MCF 10A (cell line): ENCODE measurements at regions of chr3 and their contacts with region 1.

Region 1: GRCh38 chr3:4712143-4712542 is 219.0 kb downstream of the ITPR1 start:
- DNase-seq: peak; percentile 99
- H3K4me3 Mint-ChIP-seq: peak overlapping the region; percentile 42
- H3K27ac Mint-ChIP-seq: peak overlapping the region; percentile 46
- H3K4me1 Mint-ChIP-seq: peaks cover 22% of the 10 kb centered on the region
- H3K27me3 Mint-ChIP-seq: no peaks in the 10 kb centered on the region
- CTCF ChIP-seq: no peak

Region 2: GRCh38 chr3:4233488-4233887 is 478.7 kb before region 1 on chr3:
- CTCF ChIA-PET with region 1: no interaction called
- POLR2A ChIA-PET with region 1: no interaction called
- intact Hi-C with region 1: no loop called
- DNase-seq: no peak
- H3K4me3 Mint-ChIP-seq: no peak overlapping the region
- H3K27ac Mint-ChIP-seq: no peak overlapping the region
- H3K4me1 Mint-ChIP-seq: no peaks in the 10 kb centered on the region
- H3K27me3 Mint-ChIP-seq: no peaks in the 10 kb centered on the region
- CTCF ChIP-seq: no peak

Region 3: DNA sequence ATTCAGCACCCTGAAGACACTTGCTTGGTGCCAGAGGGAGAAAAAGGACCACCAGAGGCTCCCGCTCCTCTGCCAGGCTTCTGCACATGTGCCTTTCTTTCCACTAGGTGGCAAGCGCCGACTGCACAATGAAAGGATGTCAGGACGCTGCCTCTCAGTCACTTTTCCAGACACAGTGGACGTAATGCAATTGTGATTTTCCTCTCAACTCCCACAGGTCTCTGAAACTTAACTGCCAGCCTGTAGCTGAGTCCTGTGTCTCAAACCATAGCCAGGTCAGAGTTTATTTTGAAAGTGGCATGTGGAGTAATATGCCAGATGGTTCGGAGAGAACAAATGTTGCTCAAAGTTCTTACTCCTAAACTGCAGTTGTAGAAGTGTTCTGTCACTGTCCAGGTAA is 56.1 kb before region 1 on chr3:
- CTCF ChIA-PET with region 1: interaction called, 20 read pairs
- POLR2A ChIA-PET with region 1: no interaction called
- intact Hi-C with region 1: loop called (anchors 1 kb)
- DNase-seq: peak; percentile 71
- H3K4me3 Mint-ChIP-seq: no peak overlapping the region
- H3K27ac Mint-ChIP-seq: no peak overlapping the region
- H3K4me1 Mint-ChIP-seq: peaks cover 11% of the 10 kb centered on the region
- H3K27me3 Mint-ChIP-seq: no peaks in the 10 kb centered on the region
- CTCF ChIP-seq: peak; percentile 82

Region 4: GRCh38 chr3:4826237-4827100 is 114.3 kb after region 1 on chr3:
- CTCF ChIA-PET with region 1: interaction called, 12 read pairs
- POLR2A ChIA-PET with region 1: interaction called, 10 read pairs
- intact Hi-C with region 1: no loop called
- DNase-seq: peak; percentile 68
- H3K4me3 Mint-ChIP-seq: peak overlapping the region; percentile 55
- H3K27ac Mint-ChIP-seq: peak overlapping the region; percentile 92
- H3K4me1 Mint-ChIP-seq: peaks cover 61% of the 10 kb centered on the region
- H3K27me3 Mint-ChIP-seq: no peaks in the 10 kb centered on the region
- CTCF ChIP-seq: no peak

Region 5: GRCh38 chr3:4994823-4995499 is 282.8 kb after region 1 on chr3:
- CTCF ChIA-PET with region 1: interaction called, 10 read pairs
- POLR2A ChIA-PET with region 1: interaction called, 4 read pairs
- intact Hi-C with region 1: no loop called
- DNase-seq: peak; percentile 98
- H3K4me3 Mint-ChIP-seq: no peak overlapping the region
- H3K27ac Mint-ChIP-seq: peak overlapping the region; percentile 89
- H3K4me1 Mint-ChIP-seq: peaks cover 23% of the 10 kb centered on the region
- H3K27me3 Mint-ChIP-seq: no peaks in the 10 kb centered on the region
- CTCF ChIP-seq: no peak

Region 6: GRCh38 chr3:5041315-5041714 is 329.2 kb after region 1 on chr3:
- CTCF ChIA-PET with region 1: interaction called, 10 read pairs
- POLR2A ChIA-PET with region 1: interaction called, 3 read pairs
- intact Hi-C with region 1: no loop called
- DNase-seq: no peak
- H3K4me3 Mint-ChIP-seq: no peak overlapping the region
- H3K27ac Mint-ChIP-seq: no peak overlapping the region
- H3K4me1 Mint-ChIP-seq: no peaks in the 10 kb centered on the region
- H3K27me3 Mint-ChIP-seq: no peaks in the 10 kb centered on the region
- CTCF ChIP-seq: no peak

Region 7: DNA sequence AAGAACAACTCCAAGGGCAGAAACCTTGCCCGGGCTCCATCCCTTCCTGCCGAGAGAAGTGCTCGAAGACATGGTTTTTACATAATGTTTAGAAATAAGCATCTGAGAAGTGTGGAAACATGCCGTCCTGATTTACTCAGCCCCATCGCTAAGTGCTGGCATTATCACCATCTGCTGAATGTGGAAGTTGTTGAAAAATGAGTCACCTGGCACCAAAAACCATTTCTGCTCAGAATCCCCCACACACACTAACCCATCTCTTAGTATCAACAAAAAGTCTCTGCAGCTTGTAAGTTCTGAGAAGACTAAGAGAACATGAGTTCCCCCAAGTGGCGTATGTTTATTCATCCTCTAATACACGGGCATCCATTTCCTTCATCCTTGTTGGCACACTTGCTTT is 358.9 kb after region 1 on chr3:
- CTCF ChIA-PET with region 1: interaction called, 22 read pairs
- POLR2A ChIA-PET with region 1: interaction called, 7 read pairs
- intact Hi-C with region 1: no loop called
- DNase-seq: peak; percentile 78
- H3K4me3 Mint-ChIP-seq: no peak overlapping the region
- H3K27ac Mint-ChIP-seq: peak overlapping the region; percentile 42
- H3K4me1 Mint-ChIP-seq: peaks cover 24% of the 10 kb centered on the region
- H3K27me3 Mint-ChIP-seq: no peaks in the 10 kb centered on the region
- CTCF ChIP-seq: no peak

Region 8: DNA sequence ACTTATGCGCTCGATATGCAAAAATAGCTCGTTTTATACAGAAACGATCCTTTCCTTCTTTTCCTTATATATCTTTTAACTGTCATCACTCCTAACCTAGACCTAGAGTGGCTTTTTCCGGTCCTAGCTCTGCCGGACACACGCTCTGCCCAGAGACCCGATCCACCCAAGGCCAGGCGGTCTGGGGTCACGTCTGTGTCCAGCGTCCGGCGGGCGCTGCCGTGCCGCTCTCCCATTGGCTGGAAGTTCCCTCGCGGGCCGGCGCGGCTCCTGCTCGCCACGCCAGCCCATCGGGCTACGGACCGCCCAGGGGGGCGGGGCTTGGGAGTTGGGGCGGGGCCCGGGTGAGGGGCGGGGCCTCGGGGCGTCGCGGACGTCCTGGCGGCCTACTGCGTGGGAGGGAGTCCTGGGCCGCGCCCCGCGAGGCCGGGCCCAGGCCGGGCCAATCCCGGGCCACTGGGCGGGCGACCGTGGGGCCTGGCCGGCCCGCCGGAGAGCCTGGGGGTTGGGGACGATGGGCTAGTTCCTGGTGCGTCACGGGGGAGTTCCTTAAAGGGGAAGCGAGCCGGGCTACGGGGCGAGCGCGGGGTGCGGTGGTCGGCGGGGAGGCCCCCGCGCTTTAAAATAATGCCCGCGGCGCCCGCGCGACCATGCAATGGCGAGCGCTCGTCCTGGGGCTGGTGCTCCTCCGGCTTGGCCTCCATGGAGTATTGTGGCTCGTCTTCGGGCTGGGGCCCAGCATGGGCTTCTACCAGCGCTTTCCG is 475.2 kb after region 1 on chr3 and contains the start of gene EDEM1:
- CTCF ChIA-PET with region 1: interaction called, 6 read pairs
- POLR2A ChIA-PET with region 1: interaction called, 8 read pairs
- intact Hi-C with region 1: loop called (anchors 5 kb)
- DNase-seq: peak; percentile 95
- H3K4me3 Mint-ChIP-seq: peak within 1 kb of the TSS; percentile 70
- H3K27ac Mint-ChIP-seq: peak within 1 kb of the TSS; percentile 95
- H3K4me1 Mint-ChIP-seq: peaks cover 24% of the 10 kb centered on the region
- H3K27me3 Mint-ChIP-seq: no peaks in the 10 kb centered on the region
- CTCF ChIP-seq: no peak
- total RNA-seq, gene EDEM1: 114 and 157 TPM in 2 replicates